Esophagus muscularis mucosa (tissue), 4 donors: ENCODE measurements at regions of chr1 and their contacts with region 1.

Region 1: GRCh38 chr1:15272009-15272788 is 25.2 kb downstream of the FHAD1 start:
- DNase-seq: no peak
- H3K4me3 ChIP-seq: no peak overlapping the region
- H3K27ac ChIP-seq: no peak overlapping the region
- H3K4me1 ChIP-seq: peaks cover 3 to 10% (median 8%) of the 10 kb centered on the region in 4 donors
- H3K27me3 ChIP-seq: no peaks in the 10 kb centered on the region
- CTCF ChIP-seq: peak; percentile 83 to 88 (median 86)
- EP300 ChIP-seq: no peak
- POLR2A ChIP-seq: no peak

Region 2: DNA sequence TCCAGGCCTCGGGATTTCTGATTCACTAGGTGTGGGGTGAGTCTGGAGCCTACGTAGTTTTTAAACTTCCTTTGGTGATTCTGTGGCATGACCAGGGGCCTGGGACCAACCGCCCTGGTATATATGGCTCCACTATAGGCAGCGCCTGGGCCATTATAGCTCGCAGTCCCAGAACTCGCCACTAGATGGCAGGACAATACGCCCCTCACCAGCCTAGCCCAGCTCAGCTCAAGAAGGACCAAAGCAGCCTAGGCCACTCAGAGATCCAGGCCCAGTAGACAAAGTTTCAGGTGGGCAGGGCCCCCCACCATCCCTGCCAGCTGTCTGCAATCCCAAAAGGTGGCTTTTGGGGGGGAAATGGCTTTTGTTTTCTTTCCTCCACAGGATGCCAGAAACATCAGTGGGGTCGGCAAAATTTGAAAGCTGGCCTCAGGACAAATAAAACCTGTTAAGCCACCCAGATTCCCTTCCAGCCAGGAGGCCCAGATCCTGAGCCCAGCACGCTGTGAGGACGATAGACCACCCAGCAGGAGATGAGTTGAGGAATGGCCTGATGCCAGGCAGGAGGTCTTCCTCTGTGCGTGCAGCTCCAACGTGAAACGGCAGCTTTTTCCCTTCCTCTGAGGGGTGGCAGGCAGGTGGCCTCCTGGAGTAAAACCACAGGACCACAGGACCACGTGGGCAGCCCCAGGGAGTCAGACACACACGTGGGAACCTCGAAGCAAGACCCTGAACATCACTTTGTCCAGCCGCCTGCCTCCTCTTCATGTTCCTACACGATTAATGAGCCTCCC is 143.5 kb before region 1 on chr1:
- intact Hi-C with region 1: loop called (anchors 1 kb)
- DNase-seq: no peak
- H3K4me3 ChIP-seq: no peak overlapping the region
- H3K27ac ChIP-seq: no peak overlapping the region
- H3K4me1 ChIP-seq: no peaks in the 10 kb centered on the region
- H3K27me3 ChIP-seq: peaks cover 0 to 2% (median 0%) of the 10 kb centered on the region in 4 donors
- CTCF ChIP-seq: peak; percentile 85 to 91 (median 88)
- EP300 ChIP-seq: no peak
- POLR2A ChIP-seq: no peak

Region 3: GRCh38 chr1:15152318-15153183 is 119.6 kb before region 1 on chr1:
- intact Hi-C with region 1: loop called (anchors 2 kb)
- DNase-seq: peak; percentile 96
- H3K4me3 ChIP-seq: peak overlapping the region; percentile 82 to 95 (median 88)
- H3K27ac ChIP-seq: peak overlapping the region; percentile 85 to 94 (median 90)
- H3K4me1 ChIP-seq: peaks cover 20 to 65% (median 57%) of the 10 kb centered on the region in 4 donors
- H3K27me3 ChIP-seq: peaks cover 0 to 8% (median 0%) of the 10 kb centered on the region in 4 donors
- CTCF ChIP-seq: peak; percentile 71 to 77 (median 73)
- EP300 ChIP-seq: no peak
- POLR2A ChIP-seq: no peak

Region 4: GRCh38 chr1:15201849-15202551 is 70.2 kb before region 1 on chr1:
- intact Hi-C with region 1: loop called (anchors 2 kb)
- DNase-seq: no peak
- H3K4me3 ChIP-seq: no peak overlapping the region
- H3K27ac ChIP-seq: peak overlapping the region in 1 of 4 donors; percentile 31
- H3K4me1 ChIP-seq: peaks cover 0 to 27% (median 22%) of the 10 kb centered on the region in 4 donors
- H3K27me3 ChIP-seq: no peaks in the 10 kb centered on the region
- CTCF ChIP-seq: no peak
- EP300 ChIP-seq: no peak
- POLR2A ChIP-seq: no peak

Region 5: DNA sequence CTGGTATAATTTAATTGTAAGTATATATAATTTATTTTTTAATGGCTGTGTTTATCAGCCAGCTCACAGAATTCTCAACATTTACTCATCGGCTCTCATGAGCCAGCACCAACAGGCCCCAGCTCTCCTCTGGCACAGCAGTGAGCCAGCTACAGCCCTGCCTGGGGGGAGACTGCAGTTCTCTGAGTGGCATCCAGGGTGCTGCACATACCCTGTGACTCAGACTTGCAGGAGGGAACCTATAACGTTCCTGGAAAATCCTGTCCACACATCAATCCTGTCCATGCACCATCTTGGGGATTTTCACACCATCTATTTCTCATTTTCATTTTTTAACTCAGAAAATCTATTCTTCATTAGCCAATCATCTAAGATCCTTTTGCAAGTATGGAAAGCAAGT is 11.3 kb after region 1 on chr1:
- intact Hi-C with region 1: no loop called
- DNase-seq: no peak
- H3K4me3 ChIP-seq: no peak overlapping the region
- H3K27ac ChIP-seq: peak overlapping the region; percentile 62 to 69 (median 68)
- H3K4me1 ChIP-seq: peaks cover 12 to 32% (median 22%) of the 10 kb centered on the region in 4 donors
- H3K27me3 ChIP-seq: no peaks in the 10 kb centered on the region
- CTCF ChIP-seq: peak in 2 of 3 experiments; percentile 34 to 43
- EP300 ChIP-seq: no peak
- POLR2A ChIP-seq: no peak

Region 6: DNA sequence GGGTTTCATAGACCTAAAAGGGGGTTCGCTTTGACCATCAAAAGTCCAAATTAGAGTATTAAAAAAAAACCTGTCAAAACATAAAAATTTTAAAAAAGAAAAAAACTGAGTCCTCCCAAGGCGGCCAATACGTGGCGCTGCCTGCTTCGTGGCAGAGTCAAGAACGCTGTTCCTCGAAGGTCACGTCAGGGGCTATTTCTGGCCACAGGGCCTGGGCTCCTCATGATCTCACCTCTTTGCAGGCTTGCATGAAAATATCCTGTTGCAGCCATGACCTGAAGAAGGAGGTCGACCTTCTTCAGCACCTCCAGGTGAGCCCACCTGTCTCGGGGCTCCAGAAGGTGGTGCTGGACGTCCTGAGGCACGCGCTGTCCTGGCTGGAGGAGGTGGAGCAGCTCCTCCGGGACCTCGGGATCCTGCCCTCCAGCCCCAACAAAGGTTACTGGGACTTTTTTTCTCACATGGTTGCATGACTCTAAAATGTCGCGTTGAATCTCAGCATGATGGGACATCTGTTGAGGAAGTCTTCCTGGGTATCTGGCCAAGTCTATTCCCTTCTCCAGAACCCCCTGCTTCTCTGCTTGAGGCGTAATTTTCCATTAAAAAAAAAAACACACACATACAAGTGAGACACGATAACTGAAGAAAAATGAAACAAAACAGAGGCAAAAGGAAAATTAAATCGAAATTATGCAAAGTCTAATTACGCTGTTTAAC is 57.1 kb after region 1 on chr1:
- intact Hi-C with region 1: no loop called
- DNase-seq: no peak
- H3K4me3 ChIP-seq: no peak overlapping the region
- H3K27ac ChIP-seq: peak overlapping the region in 2 of 4 donors; percentile 48 to 58
- H3K4me1 ChIP-seq: peaks cover 18 to 21% (median 20%) of the 10 kb centered on the region in 4 donors
- H3K27me3 ChIP-seq: no peaks in the 10 kb centered on the region
- CTCF ChIP-seq: peak; percentile 8 to 38 (median 27)
- EP300 ChIP-seq: no peak
- POLR2A ChIP-seq: no peak